Activated naive CD4-positive, alpha-beta T cell treated with anti-CD3 and anti-CD28 coated beads for 36 hours (primary cell): ENCODE measurements at regions of chr1 and their contacts with region 1.

Region 1: GRCh38 chr1:227542143-227543120 is 20.9 kb upstream of the ZNF678 start:
- DNase-seq: peak; percentile 92
- H3K4me3 Mint-ChIP-seq: peak overlapping the region; percentile 56
- H3K27ac Mint-ChIP-seq: no peak overlapping the region
- H3K4me1 Mint-ChIP-seq: peaks cover 5% of the 10 kb centered on the region
- H3K27me3 Mint-ChIP-seq: no peaks in the 10 kb centered on the region

Region 2: DNA sequence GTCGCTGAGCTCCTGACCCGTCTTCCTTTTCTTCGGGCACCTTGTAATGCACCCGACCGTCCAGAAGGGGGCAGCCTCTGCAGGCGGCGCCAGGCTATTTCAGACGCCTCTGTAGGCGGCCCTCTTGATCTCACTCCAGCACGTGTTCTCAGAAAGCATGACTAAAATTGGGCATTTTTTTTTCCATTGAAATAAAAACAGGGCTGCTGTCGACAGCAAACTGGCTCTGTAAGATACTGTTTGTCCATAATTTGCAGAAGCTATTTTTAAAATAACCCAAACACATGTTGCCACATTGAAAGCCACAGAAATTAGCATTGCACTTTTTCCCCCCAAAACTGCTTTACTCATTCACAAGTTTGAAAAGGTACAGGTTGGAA is 915.9 kb before region 1 on chr1:
- CTCF ChIA-PET with region 1: no interaction called
- intact Hi-C with region 1: loop called (anchors 2 kb)
- DNase-seq: peak; percentile 90
- H3K4me3 Mint-ChIP-seq: peak overlapping the region; percentile 10
- H3K27ac Mint-ChIP-seq: peak overlapping the region; percentile 68
- H3K4me1 Mint-ChIP-seq: peaks cover 25% of the 10 kb centered on the region
- H3K27me3 Mint-ChIP-seq: no peaks in the 10 kb centered on the region

Region 3: GRCh38 chr1:227077783-227078182 is 464.6 kb before region 1 on chr1:
- CTCF ChIA-PET with region 1: no interaction called
- intact Hi-C with region 1: no loop called
- DNase-seq: no peak
- H3K4me3 Mint-ChIP-seq: no peak overlapping the region
- H3K27ac Mint-ChIP-seq: no peak overlapping the region
- H3K4me1 Mint-ChIP-seq: peaks cover 3% of the 10 kb centered on the region
- H3K27me3 Mint-ChIP-seq: peaks cover 3% of the 10 kb centered on the region

Region 4: GRCh38 chr1:227449051-227449450 is 93.4 kb before region 1 on chr1:
- CTCF ChIA-PET with region 1: interaction called, 8 read pairs
- intact Hi-C with region 1: loop called (anchors 1 kb)
- DNase-seq: peak; percentile 53
- H3K4me3 Mint-ChIP-seq: no peak overlapping the region
- H3K27ac Mint-ChIP-seq: no peak overlapping the region
- H3K4me1 Mint-ChIP-seq: no peaks in the 10 kb centered on the region
- H3K27me3 Mint-ChIP-seq: peaks cover 41% of the 10 kb centered on the region

Region 5: DNA sequence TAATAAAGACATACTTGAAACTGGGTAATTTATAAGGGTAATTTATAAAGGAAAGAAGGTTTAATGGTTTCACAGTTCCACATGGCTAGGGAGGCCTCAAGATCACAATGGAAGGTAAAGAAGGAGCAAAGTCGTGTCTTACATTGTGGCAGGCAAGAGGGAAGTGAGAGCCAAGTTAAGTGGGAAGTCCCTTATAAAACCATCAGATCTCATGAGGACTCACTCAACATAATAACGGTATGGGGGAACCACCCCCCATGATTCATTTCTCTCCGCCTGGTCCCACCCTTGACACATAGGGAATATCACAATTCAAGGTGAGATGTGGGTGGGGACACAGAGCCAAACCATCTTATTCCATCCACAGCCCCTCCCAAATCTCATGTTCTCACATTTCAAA is 55.9 kb before region 1 on chr1:
- CTCF ChIA-PET with region 1: no interaction called
- intact Hi-C with region 1: loop called (anchors 1 kb)
- DNase-seq: no peak
- H3K4me3 Mint-ChIP-seq: no peak overlapping the region
- H3K27ac Mint-ChIP-seq: no peak overlapping the region
- H3K4me1 Mint-ChIP-seq: no peaks in the 10 kb centered on the region
- H3K27me3 Mint-ChIP-seq: no peaks in the 10 kb centered on the region

Region 6: GRCh38 chr1:227563324-227564201 is 21.1 kb after region 1 on chr1 and contains the start of gene ZNF678:
- CTCF ChIA-PET with region 1: interaction called, 5 read pairs
- intact Hi-C with region 1: loop called (anchors 1 kb)
- DNase-seq: peak; percentile 96
- H3K4me3 Mint-ChIP-seq: peak within 1 kb of the TSS; percentile 94
- H3K27ac Mint-ChIP-seq: peak within 1 kb of the TSS; percentile 93
- H3K4me1 Mint-ChIP-seq: peaks cover 37% of the 10 kb centered on the region
- H3K27me3 Mint-ChIP-seq: peaks cover 26% of the 10 kb centered on the region
- total RNA-seq, gene ZNF678: 9.5 TPM

Region 7: GRCh38 chr1:227604446-227604845 is 62.0 kb after region 1 on chr1:
- CTCF ChIA-PET with region 1: no interaction called
- intact Hi-C with region 1: no loop called
- DNase-seq: no peak
- H3K4me3 Mint-ChIP-seq: no peak overlapping the region
- H3K27ac Mint-ChIP-seq: no peak overlapping the region
- H3K4me1 Mint-ChIP-seq: no peaks in the 10 kb centered on the region
- H3K27me3 Mint-ChIP-seq: no peaks in the 10 kb centered on the region

Region 8: GRCh38 chr1:227728059-227728891 is 185.8 kb after region 1 on chr1:
- CTCF ChIA-PET with region 1: no interaction called
- intact Hi-C with region 1: loop called (anchors 5 kb)
- DNase-seq: peak; percentile 82
- H3K4me3 Mint-ChIP-seq: peak overlapping the region; percentile 82
- H3K27ac Mint-ChIP-seq: peak overlapping the region; percentile 65
- H3K4me1 Mint-ChIP-seq: peaks cover 22% of the 10 kb centered on the region
- H3K27me3 Mint-ChIP-seq: peaks cover 4% of the 10 kb centered on the region

Region 9: DNA sequence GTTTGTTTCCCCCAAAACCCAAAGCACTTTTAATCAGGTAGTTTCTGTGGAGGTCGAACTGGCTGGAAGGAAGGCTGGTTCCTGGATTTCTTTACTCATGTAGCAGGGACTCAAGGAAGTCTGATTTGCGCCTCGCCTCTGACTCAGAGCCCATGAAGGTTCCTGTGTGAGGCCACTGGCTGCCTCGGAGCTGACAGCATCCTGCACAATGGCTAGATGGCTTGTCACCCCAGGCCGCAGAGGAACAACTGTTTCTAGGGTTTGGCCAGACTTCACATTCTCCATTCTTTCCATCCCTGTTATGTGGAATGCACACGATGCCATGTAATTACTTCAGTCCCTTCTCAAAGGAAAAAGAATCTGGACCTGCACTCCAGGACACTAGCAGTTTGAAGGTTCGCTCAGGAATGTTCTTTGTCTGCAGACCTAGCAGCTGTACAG is 233.9 kb after region 1 on chr1:
- CTCF ChIA-PET with region 1: no interaction called
- intact Hi-C with region 1: no loop called
- DNase-seq: no peak
- H3K4me3 Mint-ChIP-seq: no peak overlapping the region
- H3K27ac Mint-ChIP-seq: no peak overlapping the region
- H3K4me1 Mint-ChIP-seq: peaks cover 15% of the 10 kb centered on the region
- H3K27me3 Mint-ChIP-seq: no peaks in the 10 kb centered on the region

Region 10: GRCh38 chr1:227946624-227947385 is 404.4 kb after region 1 on chr1:
- CTCF ChIA-PET with region 1: no interaction called
- intact Hi-C with region 1: loop called (anchors 10 kb)
- DNase-seq: peak; percentile 69
- H3K4me3 Mint-ChIP-seq: peak overlapping the region; percentile 63
- H3K27ac Mint-ChIP-seq: no peak overlapping the region
- H3K4me1 Mint-ChIP-seq: peaks cover 5% of the 10 kb centered on the region
- H3K27me3 Mint-ChIP-seq: peaks cover 7% of the 10 kb centered on the region